ENCODE measurements at regions of chr16 and their contacts with region 1.

Region 1: GRCh38 chr16:3059000-3059722 is 6.3 kb upstream of the IL32 start:
- DNase-seq: peak; percentile 92
- ATAC-seq: peak; percentile 76
- H3K4me3 Mint-ChIP-seq: peak overlapping the region; percentile 81
- H3K27ac Mint-ChIP-seq: peak overlapping the region; percentile 90
- H3K4me1 Mint-ChIP-seq: peaks cover 71% of the 10 kb centered on the region
- H3K27me3 Mint-ChIP-seq: no peaks in the 10 kb centered on the region

Region 2: DNA sequence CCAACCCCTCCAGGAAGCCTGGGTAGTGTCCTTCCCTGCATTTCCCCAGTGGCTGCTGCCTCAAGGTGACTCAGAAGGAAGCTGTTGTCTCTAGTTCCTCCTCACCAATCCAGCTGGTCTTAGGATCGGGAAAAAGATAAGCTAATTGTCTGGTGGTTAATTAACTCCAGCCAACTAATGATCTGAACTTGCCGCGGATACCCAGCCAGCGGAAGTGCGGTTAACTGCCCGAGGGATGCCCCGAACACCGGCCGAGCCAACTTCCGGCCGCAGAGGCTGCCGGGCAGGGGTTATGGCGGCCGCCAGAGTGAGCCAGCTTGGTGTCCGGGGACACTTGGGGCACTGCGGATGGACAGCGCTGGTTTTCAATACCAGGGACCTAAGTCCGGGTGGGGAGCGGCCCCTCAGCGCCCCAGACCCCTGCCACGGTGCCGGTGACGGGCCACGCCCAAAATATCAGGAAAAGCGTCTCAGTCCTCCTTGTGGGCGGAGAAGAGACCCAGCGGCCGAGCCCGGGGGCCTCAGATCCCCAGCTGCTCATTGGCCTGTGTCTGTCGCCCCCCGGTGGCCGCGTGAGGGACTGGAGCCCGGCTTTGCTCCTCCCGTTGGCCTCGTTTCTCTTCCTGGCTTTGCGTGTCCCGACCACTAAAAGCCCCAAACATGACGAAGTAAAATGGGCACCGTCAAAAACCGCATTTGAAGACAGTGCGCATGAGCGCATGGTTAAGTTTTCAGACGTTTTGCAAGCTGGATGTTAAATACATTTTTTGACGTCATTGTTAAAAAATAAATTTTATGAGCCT is 191.0 kb before region 1 on chr16:
- CTCF ChIA-PET with region 1: no interaction called
- DNase-seq: peak; percentile 98
- ATAC-seq: peak; percentile 96
- H3K4me3 Mint-ChIP-seq: peak overlapping the region; percentile 83
- H3K27ac Mint-ChIP-seq: peak overlapping the region; percentile 91
- H3K4me1 Mint-ChIP-seq: peaks cover 13% of the 10 kb centered on the region
- H3K27me3 Mint-ChIP-seq: peaks cover 3% of the 10 kb centered on the region

Region 3: DNA sequence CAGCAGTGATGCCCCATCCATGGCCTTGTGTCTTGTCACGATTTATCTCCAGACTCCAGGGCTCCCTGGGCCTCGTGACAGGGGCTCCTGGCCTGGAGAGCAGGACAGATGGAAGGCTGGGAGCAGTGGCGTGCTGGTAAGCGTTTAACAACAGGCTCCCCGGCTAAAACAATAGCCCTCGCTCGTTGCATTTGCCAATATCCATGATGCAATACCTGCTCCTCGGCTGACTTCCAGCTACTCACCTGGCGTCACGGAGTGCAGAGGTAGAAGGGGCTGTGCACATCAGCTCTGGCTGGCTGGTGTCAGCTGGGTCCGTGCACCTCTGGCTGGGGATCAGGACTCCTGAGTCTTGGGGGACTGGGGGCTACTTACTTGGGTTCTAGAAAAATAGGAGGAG is 20.9 kb before region 1 on chr16:
- CTCF ChIA-PET with region 1: interaction called, 23 read pairs
- DNase-seq: no peak
- ATAC-seq: no peak
- H3K4me3 Mint-ChIP-seq: no peak overlapping the region
- H3K27ac Mint-ChIP-seq: no peak overlapping the region
- H3K4me1 Mint-ChIP-seq: peaks cover 8% of the 10 kb centered on the region
- H3K27me3 Mint-ChIP-seq: peaks cover 61% of the 10 kb centered on the region

Region 4: DNA sequence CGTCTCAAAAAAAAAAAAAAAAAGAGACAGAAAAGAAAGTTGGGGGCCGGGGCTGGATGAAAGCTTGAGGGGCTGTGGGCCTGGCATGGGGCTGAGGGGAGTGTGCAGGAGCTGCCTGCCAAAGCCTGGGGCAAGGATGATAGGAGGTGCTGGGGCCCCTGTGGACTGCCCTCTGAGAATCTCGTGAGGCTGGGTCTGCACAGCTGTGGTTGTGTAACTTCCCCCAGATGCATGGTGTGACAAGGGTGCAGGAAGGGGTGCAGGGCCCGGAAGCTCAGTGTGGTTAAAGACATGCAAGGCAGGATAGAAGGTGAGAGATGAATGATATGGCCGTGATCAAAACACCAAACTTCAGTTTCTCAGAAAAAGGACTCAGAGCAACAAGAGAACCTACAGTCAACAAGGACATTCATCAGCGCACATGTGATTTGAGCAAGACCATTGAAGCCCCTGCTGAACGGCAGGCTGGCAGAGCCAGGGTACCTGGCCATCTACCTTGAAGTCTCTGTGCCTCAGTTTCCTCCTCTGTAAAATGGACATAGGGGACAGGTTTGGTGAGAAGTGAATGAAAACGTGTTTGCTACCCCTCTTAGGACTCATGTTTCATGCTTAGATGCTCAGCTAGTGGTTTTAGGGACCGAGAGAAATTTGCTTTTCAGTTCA is 15.8 kb after region 1 on chr16:
- CTCF ChIA-PET with region 1: interaction called, 69 read pairs
- DNase-seq: peak; percentile 97
- ATAC-seq: peak; percentile 72
- H3K4me3 Mint-ChIP-seq: peak overlapping the region; percentile 79
- H3K27ac Mint-ChIP-seq: peak overlapping the region; percentile 94
- H3K4me1 Mint-ChIP-seq: peaks cover 90% of the 10 kb centered on the region
- H3K27me3 Mint-ChIP-seq: no peaks in the 10 kb centered on the region

Region 5: DNA sequence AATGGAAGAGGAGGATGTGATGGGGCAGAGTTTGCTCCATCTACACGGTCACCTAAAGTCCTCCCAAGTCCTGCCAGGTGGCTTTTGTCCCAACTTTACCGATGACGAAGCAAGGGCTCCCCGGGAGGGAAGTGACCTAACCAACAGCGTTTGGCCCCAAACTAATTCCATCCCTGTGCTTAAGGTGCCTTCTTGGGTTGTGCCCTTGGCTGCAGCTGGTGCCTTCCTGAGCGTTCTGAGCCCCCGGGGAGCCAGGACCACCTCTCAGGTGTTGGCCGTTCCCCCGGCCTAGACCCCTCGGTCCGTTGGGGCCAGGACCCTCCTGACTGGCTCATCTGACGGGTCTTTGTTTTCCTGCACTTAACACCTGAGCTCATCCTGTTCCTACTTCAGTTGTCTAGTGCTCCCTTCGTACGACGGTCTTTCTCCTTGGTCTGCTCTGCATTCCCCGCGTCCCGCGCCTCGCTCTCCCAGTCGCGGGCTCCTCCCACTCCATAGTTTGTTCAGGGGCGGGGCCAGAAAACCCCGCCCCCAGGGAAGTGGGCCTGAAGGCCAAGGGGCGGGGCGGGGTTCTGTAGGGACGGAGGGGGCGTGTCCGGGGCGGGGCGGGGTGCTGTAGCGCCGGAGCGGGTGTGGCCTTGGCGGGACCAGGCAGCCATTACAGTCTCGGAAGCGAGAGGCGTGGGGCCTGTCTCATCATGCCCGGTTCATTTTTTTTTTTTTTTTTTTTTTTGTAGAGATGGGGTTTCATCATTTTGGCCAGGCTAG is 40.8 kb after region 1 on chr16:
- CTCF ChIA-PET with region 1: interaction called, 33 read pairs
- DNase-seq: peak; percentile 97
- ATAC-seq: peak; percentile 93
- H3K4me3 Mint-ChIP-seq: peak overlapping the region; percentile 74
- H3K27ac Mint-ChIP-seq: peak overlapping the region; percentile 80
- H3K4me1 Mint-ChIP-seq: peaks cover 51% of the 10 kb centered on the region
- H3K27me3 Mint-ChIP-seq: no peaks in the 10 kb centered on the region

Region 6: GRCh38 chr16:3123986-3124886 is 65.1 kb after region 1 on chr16:
- CTCF ChIA-PET with region 1: interaction called, 346 read pairs
- DNase-seq: peak; percentile 99
- ATAC-seq: peak; percentile 88
- H3K4me3 Mint-ChIP-seq: peak overlapping the region; percentile 98
- H3K27ac Mint-ChIP-seq: peak overlapping the region; percentile 99
- H3K4me1 Mint-ChIP-seq: peaks cover 49% of the 10 kb centered on the region
- H3K27me3 Mint-ChIP-seq: no peaks in the 10 kb centered on the region

Region 7: GRCh38 chr16:3165111-3165822 is 106.1 kb after region 1 on chr16:
- CTCF ChIA-PET with region 1: interaction called, 11 read pairs
- DNase-seq: no peak
- ATAC-seq: no peak
- H3K4me3 Mint-ChIP-seq: no peak overlapping the region
- H3K27ac Mint-ChIP-seq: peak overlapping the region; percentile 49
- H3K4me1 Mint-ChIP-seq: peaks cover 28% of the 10 kb centered on the region
- H3K27me3 Mint-ChIP-seq: peaks cover 23% of the 10 kb centered on the region

Region 8: GRCh38 chr16:3242709-3243108 is 183.5 kb after region 1 on chr16:
- CTCF ChIA-PET with region 1: no interaction called
- DNase-seq: no peak
- ATAC-seq: no peak
- H3K4me3 Mint-ChIP-seq: no peak overlapping the region
- H3K27ac Mint-ChIP-seq: no peak overlapping the region
- H3K4me1 Mint-ChIP-seq: peaks cover 7% of the 10 kb centered on the region
- H3K27me3 Mint-ChIP-seq: peaks cover 6% of the 10 kb centered on the region